ENCODE measurements at regions of chr10 and their contacts with region 1.

Region 1: GRCh38 chr10:97612386-97612785 is 20.9 kb downstream of the MORN4 start:
- DNase-seq: peak; percentile 42
- ATAC-seq: peak; percentile 96
- H3K4me3 ChIP-seq: no peak overlapping the region
- H3K27ac ChIP-seq: no peak overlapping the region
- H3K4me1 ChIP-seq: peaks cover 3 to 4% of the 10 kb centered on the region in 2 experiments; a peak in 2 of 4 replicates
- H3K27me3 ChIP-seq: no peaks in the 10 kb centered on the region
- CTCF ChIP-seq: peak; percentile 25 to 90 (median 56); a peak in 5 of 6 replicates
- POLR2A ChIP-seq: no peak
- RAD21 ChIP-seq: peak; percentile 96

Region 2: GRCh38 chr10:97407211-97407951 is 205.0 kb before region 1 on chr10:
- CTCF ChIA-PET with region 1: interaction called, 4 read pairs
- POLR2A ChIA-PET with region 1: no interaction called
- RAD21 ChIA-PET with region 1: no interaction called
- intact Hi-C with region 1: loop called (anchors 1 kb)
- DNase-seq: peak; percentile 77
- ATAC-seq: peak; percentile 96
- H3K4me3 ChIP-seq: peak overlapping the region; percentile 25 to 31
- H3K27ac ChIP-seq: 0 out of 2 replicates have a peak overlapping the region, but pooled peaks have one; percentile 25
- H3K4me1 ChIP-seq: peaks cover 8 to 44% of the 10 kb centered on the region in 2 experiments; a peak in 3 of 4 replicates
- H3K27me3 ChIP-seq: no peaks in the 10 kb centered on the region
- CTCF ChIP-seq: peak; percentile 76 to 97 (median 80)
- POLR2A ChIP-seq: no peak
- RAD21 ChIP-seq: peak; percentile 81

Region 3: DNA sequence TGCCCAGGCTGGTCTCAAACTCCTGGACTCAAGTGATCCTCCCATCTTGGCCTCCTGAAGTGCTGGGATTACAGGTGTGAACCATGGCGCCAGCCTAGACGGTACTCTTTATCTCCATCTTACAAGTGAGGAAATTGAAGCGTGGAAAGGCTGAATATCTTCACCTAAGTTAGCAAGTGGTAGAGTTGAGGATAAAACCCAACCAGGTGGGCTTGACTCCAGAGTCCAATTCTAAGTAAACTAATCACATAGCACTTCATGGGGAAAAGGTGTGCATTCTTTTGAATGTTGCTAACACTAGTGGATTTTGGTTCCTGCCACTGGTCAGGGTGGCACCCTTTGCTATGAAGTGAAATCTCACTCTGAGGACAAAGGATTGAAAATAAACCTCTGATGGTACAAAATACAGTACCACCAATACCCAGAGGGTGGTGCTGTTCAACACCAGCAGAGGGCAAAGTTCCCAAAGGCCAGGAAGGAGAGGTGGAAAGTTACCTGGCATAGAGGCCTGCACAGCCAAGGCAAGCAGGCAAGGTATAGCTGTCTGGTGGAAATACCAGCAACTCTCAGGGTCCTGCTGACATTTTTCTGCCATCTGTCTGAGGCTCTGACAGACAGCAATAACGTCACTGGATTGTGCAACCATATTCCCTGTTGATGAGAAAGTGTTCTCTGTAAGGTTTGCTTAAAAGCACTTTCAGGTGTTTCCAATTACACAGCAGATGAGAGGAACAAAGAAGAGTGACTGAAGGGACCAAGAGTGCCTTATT is 148.8 kb before region 1 on chr10:
- CTCF ChIA-PET with region 1: interaction called, 5 read pairs
- POLR2A ChIA-PET with region 1: interaction called, 3 read pairs
- RAD21 ChIA-PET with region 1: interaction called in 1 of 2 experiments, 3 read pairs
- intact Hi-C with region 1: loop called (anchors 1 kb)
- DNase-seq: peak; percentile 40
- ATAC-seq: peak; percentile 69
- H3K4me3 ChIP-seq: no peak overlapping the region
- H3K27ac ChIP-seq: peak overlapping the region; percentile 68
- H3K4me1 ChIP-seq: peaks cover 20 to 34% of the 10 kb centered on the region in 2 experiments
- H3K27me3 ChIP-seq: no peaks in the 10 kb centered on the region
- CTCF ChIP-seq: peak; percentile 82 to 95 (median 95)
- POLR2A ChIP-seq: no peak
- RAD21 ChIP-seq: peak; percentile 95

Region 4: GRCh38 chr10:97534746-97535367 is 77.5 kb before region 1 on chr10:
- CTCF ChIA-PET with region 1: interaction called, 4 read pairs
- POLR2A ChIA-PET with region 1: no interaction called
- RAD21 ChIA-PET with region 1: no interaction called
- intact Hi-C with region 1: loop called (anchors 2 kb)
- DNase-seq: no peak
- ATAC-seq: peak; percentile 84
- H3K4me3 ChIP-seq: no peak overlapping the region
- H3K27ac ChIP-seq: no peak overlapping the region
- H3K4me1 ChIP-seq: peaks cover 25 to 50% of the 10 kb centered on the region in 2 experiments
- H3K27me3 ChIP-seq: no peaks in the 10 kb centered on the region
- CTCF ChIP-seq: peak; percentile 83 to 91 (median 89); a peak in 5 of 6 replicates
- POLR2A ChIP-seq: no peak
- RAD21 ChIP-seq: peak; percentile 83

Region 5: DNA sequence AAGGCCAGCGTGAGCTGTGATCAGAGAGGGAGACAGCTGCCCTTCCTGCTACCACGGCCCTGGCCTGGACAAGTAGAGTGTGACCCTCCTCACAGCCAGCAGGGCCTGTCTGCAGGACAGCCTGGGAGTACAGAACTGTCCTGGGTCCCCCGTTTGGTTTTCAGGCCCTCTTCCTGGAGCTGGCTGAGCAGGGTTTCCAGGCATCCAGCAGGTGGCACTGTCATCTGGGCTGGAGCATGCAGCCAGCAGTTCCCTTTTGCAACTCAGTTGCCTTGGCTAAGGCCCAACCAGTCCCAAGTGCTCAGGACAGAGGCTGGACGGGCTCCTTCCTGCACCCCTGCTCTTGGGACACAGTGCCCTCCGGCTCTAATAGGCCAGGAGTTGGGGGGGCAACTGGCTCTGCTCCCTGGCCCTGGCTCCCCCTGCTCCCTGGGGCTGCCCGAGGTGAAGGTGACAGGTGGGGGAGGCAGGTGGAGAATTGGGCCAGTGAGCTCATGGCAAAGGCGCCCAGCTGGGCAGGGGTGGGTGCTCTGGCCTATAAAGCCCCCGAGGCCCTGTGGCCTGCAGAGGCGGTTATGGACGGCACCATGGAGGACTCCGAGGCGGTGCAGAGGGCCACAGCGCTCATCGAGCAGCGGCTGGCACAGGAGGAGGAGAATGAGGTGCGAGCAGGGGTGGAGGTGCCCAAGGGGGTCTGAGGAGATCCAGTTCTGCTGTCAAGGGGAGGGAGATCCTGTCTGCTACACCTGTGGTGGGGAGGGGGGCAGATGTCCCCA is 40.0 kb before region 1 on chr10 and contains the start of gene ANKRD2:
- CTCF ChIA-PET with region 1: interaction called, 35 read pairs
- POLR2A ChIA-PET with region 1: no interaction called
- RAD21 ChIA-PET with region 1: interaction called, 7 to 12 read pairs
- intact Hi-C with region 1: loop called (anchors 1 kb)
- DNase-seq: peak; percentile 59
- ATAC-seq: peak; percentile 78
- H3K4me3 ChIP-seq: peak within 1 kb of the TSS in 1 of 2 experiments; percentile 51; a peak in 2 of 4 replicates
- H3K27ac ChIP-seq: peak within 1 kb of the TSS; percentile 68
- H3K4me1 ChIP-seq: peaks cover 53 to 60% of the 10 kb centered on the region in 2 experiments
- H3K27me3 ChIP-seq: no peaks in the 10 kb centered on the region
- CTCF ChIP-seq: peak; percentile 85 to 97 (median 93)
- POLR2A ChIP-seq: no peak
- RAD21 ChIP-seq: peak; percentile 93
- total RNA-seq, gene ANKRD2: 0.15 TPM

Region 6: DNA sequence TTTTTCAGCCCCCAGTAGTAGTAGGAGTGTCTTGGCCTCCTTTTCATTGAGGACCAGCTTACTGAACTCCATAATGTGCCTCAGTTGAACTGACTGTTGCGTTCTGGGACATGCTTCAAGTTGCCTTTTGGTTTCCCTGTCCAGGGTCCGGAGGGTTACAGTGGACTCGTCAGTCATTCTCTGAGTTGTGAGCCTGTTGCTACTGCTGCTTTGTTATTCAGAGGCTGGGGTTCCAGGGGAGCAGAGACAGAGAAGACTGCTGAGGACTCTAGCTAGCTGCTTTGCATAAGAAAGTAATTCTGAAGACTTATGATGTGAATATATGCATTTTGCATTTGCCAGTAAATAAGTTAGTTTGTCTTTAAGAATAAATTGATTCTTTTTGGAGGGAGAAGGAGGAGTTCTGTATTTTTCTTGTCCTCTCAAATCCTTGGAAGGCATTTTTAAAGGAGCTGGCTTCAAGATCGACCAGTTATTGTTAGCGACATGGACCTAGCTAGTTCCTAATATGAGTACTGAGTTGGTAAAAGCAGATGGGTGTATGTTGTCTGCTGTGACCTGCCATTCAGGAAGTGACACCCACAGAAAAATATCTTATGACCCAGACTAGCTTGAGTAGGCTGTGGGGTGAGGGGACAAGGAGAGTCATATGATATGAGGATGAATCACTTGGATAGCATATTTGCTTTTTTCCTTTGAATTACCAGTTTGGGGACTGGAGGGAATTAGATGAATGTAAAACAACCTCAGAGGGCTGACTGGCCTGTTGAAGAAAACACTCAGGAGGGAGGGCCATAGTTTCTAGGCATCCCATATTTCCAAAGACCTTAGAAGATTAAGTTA is 36.4 kb after region 1 on chr10:
- CTCF ChIA-PET with region 1: no interaction called
- POLR2A ChIA-PET with region 1: no interaction called
- RAD21 ChIA-PET with region 1: no interaction called
- intact Hi-C with region 1: no loop called
- DNase-seq: peak; percentile 69
- ATAC-seq: peak; percentile 87
- H3K4me3 ChIP-seq: peak overlapping the region in 1 of 2 experiments; percentile 41; a peak in 3 of 4 replicates
- H3K27ac ChIP-seq: peak overlapping the region; percentile 60
- H3K4me1 ChIP-seq: peaks cover 46 to 59% of the 10 kb centered on the region in 2 experiments
- H3K27me3 ChIP-seq: no peaks in the 10 kb centered on the region
- CTCF ChIP-seq: no peak
- POLR2A ChIP-seq: no peak
- RAD21 ChIP-seq: peak; percentile 35; the same call in 1 of the 2 replicates

Measured in HCT116 (cell line).